CD4-positive, alpha-beta T cell (primary cell): ENCODE measurements at regions of chrX and their contacts with region 1.

Region 1: GRCh38 chrX:107747596-107748161 is 27.9 kb downstream of the TSC22D3 start:
- DNase-seq: no peak
- ATAC-seq: no peak
- H3K4me3 ChIP-seq: no peak overlapping the region
- H3K4me3 Mint-ChIP-seq: no peak overlapping the region
- H3K27ac ChIP-seq: no peak overlapping the region
- H3K27ac Mint-ChIP-seq: no peak overlapping the region
- H3K4me1 ChIP-seq: peaks cover 11% of the 10 kb centered on the region
- H3K4me1 Mint-ChIP-seq: peaks cover 11% of the 10 kb centered on the region
- H3K27me3 ChIP-seq: no peaks in the 10 kb centered on the region
- H3K27me3 Mint-ChIP-seq: no peaks in the 10 kb centered on the region
- CTCF ChIP-seq: no peak

Region 2: DNA sequence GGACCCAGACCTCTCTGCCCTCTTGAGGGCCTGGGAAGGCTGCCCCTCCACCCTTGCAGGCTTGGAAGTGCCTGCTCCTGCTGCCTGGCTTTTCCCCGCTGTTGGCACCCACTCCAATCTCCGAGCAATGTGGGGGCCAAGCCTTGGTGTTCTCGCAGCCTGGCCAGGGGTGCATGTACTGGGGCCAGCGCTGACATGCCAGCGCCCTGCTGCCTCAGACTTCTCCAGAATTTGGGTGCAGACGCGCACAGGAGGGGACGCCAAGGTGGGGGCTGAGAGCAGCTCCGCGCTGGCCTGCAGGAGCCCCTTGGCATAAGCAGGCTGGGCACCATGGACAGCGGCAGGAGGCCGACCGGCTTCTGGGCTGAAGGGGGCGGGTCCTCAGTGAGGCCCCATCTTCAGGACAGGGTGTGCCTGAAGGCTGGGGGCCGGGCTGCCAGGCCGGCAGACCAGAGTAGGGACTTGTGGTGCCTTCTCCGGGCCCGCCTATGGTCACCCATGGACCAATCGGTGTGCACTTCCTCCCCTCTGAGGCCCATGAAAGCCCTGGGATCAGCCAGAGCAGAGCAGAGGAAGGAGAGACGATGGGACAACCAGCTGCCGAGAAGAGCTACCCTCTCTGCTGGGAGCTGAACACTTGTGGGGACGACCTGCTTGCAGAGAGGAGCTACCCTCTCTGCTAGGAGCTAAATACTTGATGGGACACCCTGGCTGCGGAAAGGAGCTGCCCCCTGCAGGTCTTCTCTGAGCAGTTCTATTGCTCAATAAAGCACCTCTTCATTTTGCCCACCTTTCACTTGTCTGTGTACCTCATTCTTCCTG is 423.0 kb before region 1 on chrX:
- CTCF ChIA-PET with region 1: no interaction called
- POLR2A ChIA-PET with region 1: no interaction called
- intact Hi-C with region 1: no loop called
- DNase-seq: peak in 3 of 14 experiments; percentile 1 to 7 (median 2)
- ATAC-seq: no peak
- H3K4me3 ChIP-seq: no peak overlapping the region
- H3K4me3 Mint-ChIP-seq: no peak overlapping the region
- H3K27ac ChIP-seq: no peak overlapping the region
- H3K27ac Mint-ChIP-seq: no peak overlapping the region
- H3K4me1 ChIP-seq: no peaks in the 10 kb centered on the region
- H3K4me1 Mint-ChIP-seq: no peaks in the 10 kb centered on the region
- H3K27me3 ChIP-seq: peaks cover 0 to 2% of the 10 kb centered on the region in 2 experiments
- H3K27me3 Mint-ChIP-seq: no peaks in the 10 kb centered on the region
- CTCF ChIP-seq: no peak

Region 3: GRCh38 chrX:107509572-107509971 is 238.1 kb before region 1 on chrX:
- CTCF ChIA-PET with region 1: no interaction called
- POLR2A ChIA-PET with region 1: no interaction called
- intact Hi-C with region 1: no loop called
- DNase-seq: no peak
- ATAC-seq: no peak
- H3K4me3 ChIP-seq: no peak overlapping the region
- H3K4me3 Mint-ChIP-seq: no peak overlapping the region
- H3K27ac ChIP-seq: no peak overlapping the region
- H3K27ac Mint-ChIP-seq: no peak overlapping the region
- H3K4me1 ChIP-seq: peaks cover 7% of the 10 kb centered on the region
- H3K4me1 Mint-ChIP-seq: no peaks in the 10 kb centered on the region
- H3K27me3 ChIP-seq: peaks cover 7 to 38% of the 10 kb centered on the region in 2 experiments
- H3K27me3 Mint-ChIP-seq: peaks cover 49% of the 10 kb centered on the region
- CTCF ChIP-seq: no peak

Region 4: DNA sequence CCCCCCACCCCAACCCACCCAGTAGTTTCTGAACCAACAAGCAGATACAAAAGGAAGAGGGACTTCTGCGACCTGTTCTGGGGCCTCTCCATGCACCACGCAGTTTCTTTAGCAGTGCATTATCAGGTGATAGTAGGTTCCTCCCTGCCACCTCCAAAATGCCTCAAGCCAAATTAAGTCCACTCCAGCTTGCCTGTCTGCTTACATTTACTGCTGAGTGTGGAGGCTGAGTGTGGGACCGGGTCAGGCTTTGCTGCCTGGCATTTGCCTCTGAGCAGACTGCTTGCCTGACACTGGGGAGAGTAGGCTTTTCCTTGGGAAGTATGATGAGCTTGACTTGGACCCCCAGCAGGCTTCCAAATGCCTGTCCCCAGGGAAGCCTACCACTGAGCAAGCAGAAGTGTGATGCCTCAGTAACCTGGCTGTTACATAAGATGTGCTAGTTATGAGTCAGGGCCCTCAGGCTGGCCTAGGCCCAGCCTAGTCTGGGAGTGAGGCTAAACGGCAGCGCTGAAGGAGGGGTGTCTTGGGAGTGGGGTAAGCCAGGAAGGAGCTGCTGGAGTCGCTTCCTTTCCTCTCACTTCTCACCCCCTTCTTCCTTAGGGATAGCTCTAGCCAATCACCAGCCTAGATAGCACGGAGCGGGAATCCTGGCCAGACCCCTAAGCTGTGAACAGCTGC is 18.9 kb after region 1 on chrX:
- CTCF ChIA-PET with region 1: no interaction called
- POLR2A ChIA-PET with region 1: no interaction called
- intact Hi-C with region 1: loop called in 1 of 2 experiments (anchors 2 kb)
- DNase-seq: no peak
- ATAC-seq: no peak
- H3K4me3 ChIP-seq: no peak overlapping the region
- H3K4me3 Mint-ChIP-seq: no peak overlapping the region
- H3K27ac ChIP-seq: no peak overlapping the region
- H3K27ac Mint-ChIP-seq: no peak overlapping the region
- H3K4me1 ChIP-seq: no peaks in the 10 kb centered on the region
- H3K4me1 Mint-ChIP-seq: peaks cover 19% of the 10 kb centered on the region
- H3K27me3 ChIP-seq: no peaks in the 10 kb centered on the region
- H3K27me3 Mint-ChIP-seq: no peaks in the 10 kb centered on the region
- CTCF ChIP-seq: no peak